Activated naive CD4-positive, alpha-beta T cell treated with anti-CD3 and anti-CD28 coated beads for 36 hours (primary cell): ENCODE measurements at regions of chr1 and their contacts with region 1.

Region 1: DNA sequence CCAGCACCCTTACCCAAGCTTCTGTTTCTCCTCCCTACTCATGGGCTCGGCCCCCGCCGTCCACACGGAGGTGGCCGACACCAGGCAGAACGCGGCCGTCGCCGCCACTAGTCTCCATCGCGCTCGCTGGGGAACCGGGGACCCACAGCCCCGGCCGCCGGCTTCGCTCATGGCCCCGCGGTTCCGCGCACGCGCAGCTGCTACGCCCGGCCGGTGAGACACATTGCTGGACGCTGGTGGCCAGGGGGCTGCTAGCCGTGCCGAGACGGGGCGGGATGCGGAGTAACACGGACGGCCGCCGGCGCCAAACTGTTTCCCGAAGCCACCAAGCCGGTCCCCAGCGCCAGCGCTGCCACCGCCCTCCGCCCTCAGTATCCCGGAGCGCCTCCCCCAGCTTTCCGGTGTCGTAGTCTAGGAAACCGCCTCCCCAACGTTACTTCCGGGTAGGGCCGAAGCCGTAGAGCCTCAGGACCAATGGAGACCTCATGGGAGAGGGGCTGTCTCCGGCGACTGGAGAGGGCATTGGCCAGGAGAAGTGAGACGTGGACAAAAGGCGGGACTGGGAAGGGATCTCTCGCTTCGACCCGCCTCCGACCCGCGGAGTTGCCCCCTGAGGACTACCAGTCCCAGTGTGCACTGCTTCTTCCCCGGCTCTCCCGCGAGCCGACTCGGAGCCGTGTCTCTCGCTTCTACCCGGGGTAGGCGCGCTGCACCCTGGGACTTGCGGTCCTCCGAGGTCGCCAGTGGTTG is at the start of gene EDEM3:
- DNase-seq: peak; percentile 98
- H3K4me3 Mint-ChIP-seq: peak within 1 kb of the TSS; percentile 88
- H3K27ac Mint-ChIP-seq: peak within 1 kb of the TSS; percentile 88
- H3K4me1 Mint-ChIP-seq: peaks cover 36% of the 10 kb centered on the region
- H3K27me3 Mint-ChIP-seq: no peaks in the 10 kb centered on the region
- total RNA-seq, gene EDEM3: 9.9 to 10.5 TPM

Region 2: GRCh38 chr1:183101841-183102276 is 1652.8 kb before region 1 on chr1:
- CTCF ChIA-PET with region 1: no interaction called
- intact Hi-C with region 1: no loop called
- DNase-seq: no peak
- H3K4me3 Mint-ChIP-seq: no peak overlapping the region
- H3K27ac Mint-ChIP-seq: no peak overlapping the region
- H3K4me1 Mint-ChIP-seq: no peaks in the 10 kb centered on the region
- H3K27me3 Mint-ChIP-seq: peaks cover 2% of the 10 kb centered on the region

Region 3: DNA sequence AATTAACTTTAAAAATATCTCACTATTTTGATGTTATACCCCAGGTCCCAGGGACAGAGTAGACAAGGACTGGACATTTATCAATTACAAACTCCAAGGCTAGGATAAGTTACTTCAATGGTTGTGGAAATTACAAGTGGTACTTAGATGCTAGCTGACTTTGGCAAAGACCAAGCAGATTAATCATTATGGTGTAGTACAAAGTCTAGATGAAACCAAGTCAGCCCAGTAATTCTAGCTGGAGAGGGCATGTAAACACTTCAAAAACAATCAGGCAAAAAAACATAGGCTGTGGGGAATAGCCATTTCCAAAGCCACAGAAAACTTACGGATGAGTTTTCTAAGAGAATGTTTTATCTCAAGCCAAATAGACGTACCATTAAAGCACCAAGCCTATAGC is 578.6 kb before region 1 on chr1:
- CTCF ChIA-PET with region 1: no interaction called
- intact Hi-C with region 1: no loop called
- DNase-seq: no peak
- H3K4me3 Mint-ChIP-seq: no peak overlapping the region
- H3K27ac Mint-ChIP-seq: no peak overlapping the region
- H3K4me1 Mint-ChIP-seq: no peaks in the 10 kb centered on the region
- H3K27me3 Mint-ChIP-seq: no peaks in the 10 kb centered on the region

Region 4: DNA sequence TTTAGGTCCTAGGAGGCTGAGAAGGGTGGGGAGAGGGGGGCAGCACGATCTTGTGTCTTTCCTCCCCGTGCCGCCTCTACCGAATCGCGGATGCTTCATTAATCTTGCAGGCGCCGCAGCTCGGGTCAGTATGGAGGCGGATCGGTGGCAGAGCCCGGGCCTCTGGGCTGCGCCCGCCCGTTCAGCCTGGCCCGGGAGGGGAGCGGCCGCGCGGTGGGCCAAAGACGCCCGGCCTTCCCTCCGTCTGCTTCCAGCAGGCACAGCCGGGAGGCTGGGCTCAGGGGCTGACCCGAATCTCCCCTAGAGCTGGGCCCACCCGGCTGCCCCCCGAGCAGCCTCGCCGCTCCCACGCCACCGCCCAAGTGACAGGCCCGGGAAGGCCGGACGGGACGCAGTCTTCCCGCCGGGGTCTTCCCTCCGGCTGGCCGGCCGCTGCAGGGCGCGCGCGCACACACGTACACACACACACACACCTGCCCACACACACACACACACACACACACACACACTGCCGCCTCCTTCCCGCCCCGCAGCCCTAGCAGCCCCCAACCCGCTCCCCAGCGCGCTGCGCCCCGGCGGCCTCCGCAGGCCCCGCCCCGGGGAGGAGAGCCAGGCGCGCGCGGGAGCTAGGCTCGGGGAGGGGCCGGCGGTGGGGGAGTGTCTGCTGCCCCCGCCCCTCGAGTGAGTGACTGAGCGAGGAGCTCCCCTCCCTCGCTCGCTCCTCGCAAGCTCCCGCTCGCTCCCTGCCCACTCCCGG is 368.2 kb before region 1 on chr1 and contains the start of gene C1orf21:
- CTCF ChIA-PET with region 1: no interaction called
- intact Hi-C with region 1: loop called (anchors 2 kb)
- DNase-seq: peak; percentile 80
- H3K4me3 Mint-ChIP-seq: peak within 1 kb of the TSS; percentile 78
- H3K27ac Mint-ChIP-seq: no peak within 1 kb of the TSS
- H3K4me1 Mint-ChIP-seq: peaks cover 14% of the 10 kb centered on the region
- H3K27me3 Mint-ChIP-seq: peaks cover 59% of the 10 kb centered on the region
- total RNA-seq, gene C1orf21: 1.2 to 1.4 TPM

Region 5: GRCh38 chr1:184407816-184408537 is 346.7 kb before region 1 on chr1:
- CTCF ChIA-PET with region 1: no interaction called
- intact Hi-C with region 1: no loop called
- DNase-seq: no peak
- H3K4me3 Mint-ChIP-seq: no peak overlapping the region
- H3K27ac Mint-ChIP-seq: no peak overlapping the region
- H3K4me1 Mint-ChIP-seq: no peaks in the 10 kb centered on the region
- H3K27me3 Mint-ChIP-seq: no peaks in the 10 kb centered on the region

Region 6: GRCh38 chr1:184743062-184743756 is 11.4 kb before region 1 on chr1:
- CTCF ChIA-PET with region 1: no interaction called
- intact Hi-C with region 1: loop called (anchors 1 kb)
- DNase-seq: peak; percentile 18
- H3K4me3 Mint-ChIP-seq: no peak overlapping the region
- H3K27ac Mint-ChIP-seq: peak overlapping the region; percentile 43
- H3K4me1 Mint-ChIP-seq: peaks cover 53% of the 10 kb centered on the region
- H3K27me3 Mint-ChIP-seq: no peaks in the 10 kb centered on the region

Region 7: DNA sequence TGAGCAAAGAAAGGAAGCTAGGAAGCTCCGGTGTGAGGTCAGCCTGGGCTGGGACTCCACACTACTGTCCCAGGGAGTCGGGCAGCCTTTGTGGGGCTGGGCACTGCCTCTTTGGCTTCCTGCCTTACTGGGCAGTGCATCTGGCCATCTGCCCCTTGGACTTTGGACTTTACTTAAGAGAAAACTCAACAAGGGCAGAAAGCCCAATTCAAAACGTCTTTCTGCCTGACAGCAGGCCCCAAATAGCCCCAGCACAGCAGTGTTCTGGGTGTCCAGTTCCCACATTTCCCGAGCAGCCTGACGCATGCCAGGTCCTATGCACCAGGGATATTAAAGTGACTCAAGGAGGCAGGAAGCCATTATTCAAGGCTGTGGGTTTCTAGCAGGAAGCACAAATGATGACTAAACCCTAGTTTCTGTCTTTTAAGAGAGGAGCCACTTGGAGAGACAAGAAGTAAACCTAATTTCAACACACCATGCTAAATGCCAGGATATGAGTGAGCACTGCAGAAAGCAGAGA is 37.9 kb after region 1 on chr1:
- CTCF ChIA-PET with region 1: no interaction called
- intact Hi-C with region 1: loop called (anchors 2 kb)
- DNase-seq: peak; percentile 39
- H3K4me3 Mint-ChIP-seq: no peak overlapping the region
- H3K27ac Mint-ChIP-seq: no peak overlapping the region
- H3K4me1 Mint-ChIP-seq: peaks cover 11% of the 10 kb centered on the region
- H3K27me3 Mint-ChIP-seq: no peaks in the 10 kb centered on the region

Region 8: DNA sequence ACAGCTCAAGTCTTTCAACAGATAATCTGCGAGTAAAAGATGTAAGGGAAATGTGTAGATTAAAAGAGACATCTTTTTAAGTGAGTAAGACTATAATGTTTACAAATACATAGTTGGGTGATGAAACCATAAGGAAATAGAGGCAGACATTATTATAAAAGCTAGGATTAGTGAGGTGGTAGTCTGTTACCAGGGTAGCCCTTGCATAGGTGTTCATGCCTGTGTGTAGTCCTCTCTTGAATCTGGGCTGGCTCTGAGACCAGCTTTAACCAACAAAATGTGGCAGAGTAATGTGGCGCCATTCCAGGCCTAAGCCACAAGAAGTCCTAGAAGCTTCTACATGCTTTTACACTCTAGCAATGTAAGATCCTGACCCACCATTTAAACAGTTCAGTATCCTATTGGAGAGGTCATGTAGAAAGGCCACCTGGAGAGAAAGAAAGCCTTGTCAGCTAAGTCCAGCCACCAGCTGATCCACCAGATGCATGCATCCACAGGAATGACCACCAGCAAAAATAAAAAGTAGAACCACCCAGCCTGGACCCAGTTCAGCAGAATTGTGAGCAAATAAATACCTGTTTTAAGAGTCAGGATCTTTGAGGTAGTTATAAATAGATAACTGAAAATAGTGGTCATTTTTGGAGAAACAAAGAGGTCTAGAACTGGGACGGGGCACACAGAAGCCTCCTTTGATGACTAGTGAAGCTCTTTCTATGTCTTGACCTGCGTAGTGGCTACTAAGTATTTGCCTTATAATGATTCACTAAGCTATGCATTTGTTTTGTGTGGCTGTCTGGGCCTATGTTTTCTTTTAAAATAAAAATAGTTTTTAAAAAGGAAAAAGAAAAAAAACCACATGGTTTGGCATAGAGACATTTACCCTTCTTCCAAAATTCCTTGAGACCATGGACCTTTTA is 211.6 kb after region 1 on chr1:
- CTCF ChIA-PET with region 1: no interaction called
- intact Hi-C with region 1: no loop called
- DNase-seq: no peak
- H3K4me3 Mint-ChIP-seq: no peak overlapping the region
- H3K27ac Mint-ChIP-seq: no peak overlapping the region
- H3K4me1 Mint-ChIP-seq: peaks cover 14% of the 10 kb centered on the region
- H3K27me3 Mint-ChIP-seq: peaks cover 8% of the 10 kb centered on the region